Mammary epithelial cell (primary cell): ENCODE measurements at regions of chr9 and their contacts with region 1.

Region 1: GRCh38 chr9:74858751-74859414 is 28.8 kb downstream of the TRPM6 start:
- DNase-seq: no peak
- H3K4me3 ChIP-seq: no peak overlapping the region
- H3K27ac ChIP-seq: no peak overlapping the region
- H3K4me1 ChIP-seq: no peaks in the 10 kb centered on the region
- H3K27me3 ChIP-seq: no peaks in the 10 kb centered on the region
- CTCF ChIP-seq: no peak

Region 2: GRCh38 chr9:74824654-74825053 is 34.2 kb before region 1 on chr9:
- CTCF ChIA-PET with region 1: no interaction called
- dilution Hi-C with region 1: loop called (anchors 5 kb)
- in situ Hi-C with region 1: no loop called
- intact Hi-C with region 1: no loop called
- DNase-seq: peak; percentile 47
- H3K4me3 ChIP-seq: no peak overlapping the region
- H3K27ac ChIP-seq: no peak overlapping the region
- H3K4me1 ChIP-seq: no peaks in the 10 kb centered on the region
- H3K27me3 ChIP-seq: no peaks in the 10 kb centered on the region
- CTCF ChIP-seq: no peak

Region 3: GRCh38 chr9:74920944-74921626 is 62.2 kb after region 1 on chr9:
- CTCF ChIA-PET with region 1: no interaction called
- dilution Hi-C with region 1: loop called (anchors 5 kb)
- in situ Hi-C with region 1: no loop called
- intact Hi-C with region 1: no loop called
- DNase-seq: peak; percentile 18
- H3K4me3 ChIP-seq: no peak overlapping the region
- H3K27ac ChIP-seq: no peak overlapping the region
- H3K4me1 ChIP-seq: peaks cover 6% of the 10 kb centered on the region
- H3K27me3 ChIP-seq: no peaks in the 10 kb centered on the region
- CTCF ChIP-seq: no peak